ENCODE measurements at regions of chr1 and their contacts with region 1.

Region 1: DNA sequence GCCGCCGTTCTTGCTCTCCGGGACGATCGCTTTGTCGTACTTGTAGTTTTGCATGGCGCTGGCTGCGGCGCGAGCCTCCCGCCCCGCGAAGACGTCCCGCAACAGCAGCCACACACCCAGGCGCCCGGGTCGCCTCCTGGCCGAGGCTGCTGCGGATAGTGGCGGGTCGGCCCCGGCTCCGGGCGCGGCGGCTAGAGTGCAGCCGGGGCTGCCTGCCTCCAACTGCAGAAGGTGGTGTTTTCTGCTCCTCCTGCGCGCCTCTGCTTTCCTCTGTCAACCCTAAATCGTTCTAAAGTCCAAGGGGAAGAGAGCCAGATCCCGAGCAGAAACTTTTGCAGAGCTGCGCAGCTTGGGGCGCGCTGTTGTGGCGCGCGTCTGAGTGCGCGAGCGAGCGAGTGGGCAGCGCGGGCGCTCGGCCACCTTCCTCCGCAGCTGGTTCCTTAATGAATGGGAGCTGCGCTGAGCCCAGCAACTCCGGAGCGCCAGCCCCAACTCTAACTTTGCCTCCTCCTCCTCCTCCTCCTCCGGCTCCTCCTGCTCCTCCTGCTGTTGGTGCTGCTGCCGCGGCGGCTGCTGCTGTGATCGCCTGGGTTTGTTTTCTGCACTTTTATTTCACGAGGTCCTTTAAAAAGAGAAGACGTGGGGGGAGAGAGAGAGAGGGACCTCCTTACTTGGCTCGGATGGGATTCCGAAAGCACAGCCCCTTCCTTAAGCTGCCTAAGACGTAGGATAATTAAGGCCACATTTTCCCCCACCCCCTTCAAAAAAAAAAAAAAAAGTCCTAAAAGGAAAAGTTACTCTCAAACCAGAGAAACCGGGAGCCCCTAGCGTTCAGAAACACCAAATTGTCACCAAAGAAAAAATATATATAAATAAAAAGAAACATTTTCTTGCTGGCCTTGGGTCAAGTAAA is at the start of gene PLPP3:
- DNase-seq: peak; percentile 83 to 93
- ATAC-seq: peak; percentile 87 to 88 (median 88)
- H3K4me3 ChIP-seq: peak within 1 kb of the TSS; percentile 90
- H3K27ac ChIP-seq: peak within 1 kb of the TSS; percentile 91
- H3K4me1 ChIP-seq: peaks cover 39% of the 10 kb centered on the region
- H3K27me3 ChIP-seq: no peaks in the 10 kb centered on the region
- CTCF ChIP-seq: peak; percentile 30
- total RNA-seq, gene PLPP3: 35.5 to 51.0 (median 43.6) TPM

Region 2: DNA sequence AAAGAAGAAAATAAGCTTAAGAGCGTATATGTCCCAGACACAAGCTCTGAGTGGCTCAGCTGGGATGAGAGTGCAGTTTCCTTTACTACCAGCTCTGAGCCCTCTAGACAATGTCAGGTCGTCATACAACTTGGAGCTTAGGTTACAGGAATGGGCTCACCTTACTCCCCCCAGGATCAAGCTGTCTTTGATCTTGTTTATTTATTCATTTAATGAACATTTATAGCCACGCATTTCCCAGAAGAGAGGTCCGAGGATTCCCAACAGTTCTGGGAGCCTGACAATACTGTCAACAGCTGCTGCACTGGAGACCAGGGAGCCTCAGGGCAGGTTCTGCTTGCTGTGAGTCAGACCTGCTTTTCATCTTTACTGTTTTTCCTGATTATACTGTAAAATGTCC is 378.8 kb before region 1 on chr1:
- intact Hi-C with region 1: loop called in 1 of 2 experiments (anchors 5 kb)
- DNase-seq: peak in 1 of 2 donors; percentile 24
- ATAC-seq: peak; percentile 77 to 85 (median 83)
- H3K4me3 ChIP-seq: peak overlapping the region; percentile 2
- H3K27ac ChIP-seq: peak overlapping the region; percentile 73
- H3K4me1 ChIP-seq: peaks cover 49% of the 10 kb centered on the region
- H3K27me3 ChIP-seq: no peaks in the 10 kb centered on the region
- CTCF ChIP-seq: no peak

Region 3: GRCh38 chr1:56409094-56409691 is 170.0 kb before region 1 on chr1:
- intact Hi-C with region 1: loop called in 1 of 2 experiments (anchors 5 kb)
- DNase-seq: peak; percentile 13 to 61
- ATAC-seq: peak; percentile 71 to 87 (median 74)
- H3K4me3 ChIP-seq: no peak overlapping the region
- H3K27ac ChIP-seq: no peak overlapping the region
- H3K4me1 ChIP-seq: no peaks in the 10 kb centered on the region
- H3K27me3 ChIP-seq: peaks cover 0 to 2% (median 0%) of the 10 kb centered on the region in 3 donors
- CTCF ChIP-seq: peak; percentile 51

Region 4: GRCh38 chr1:56525489-56526041 is 53.7 kb before region 1 on chr1:
- intact Hi-C with region 1: loop called in 1 of 2 experiments (anchors 5 kb)
- DNase-seq: no peak
- ATAC-seq: peak; percentile 23 to 67 (median 60)
- H3K4me3 ChIP-seq: no peak overlapping the region
- H3K27ac ChIP-seq: peak overlapping the region; percentile 44
- H3K4me1 ChIP-seq: peaks cover 55% of the 10 kb centered on the region
- H3K27me3 ChIP-seq: no peaks in the 10 kb centered on the region
- CTCF ChIP-seq: no peak